Prostate gland (tissue), 2 donors: ENCODE measurements at regions of chr1 and their contacts with region 1.

Region 1: GRCh38 chr1:2270260-2271100 is 42.4 kb downstream of the SKI start:
- DNase-seq: no peak
- H3K4me3 ChIP-seq: no peak overlapping the region
- H3K27ac ChIP-seq: peak overlapping the region in 1 of 2 donors; percentile 18
- H3K4me1 ChIP-seq: peaks cover 24% of the 10 kb centered on the region
- H3K27me3 ChIP-seq: no peaks in the 10 kb centered on the region
- CTCF ChIP-seq: no peak
- POLR2A ChIP-seq: no peak

Region 2: GRCh38 chr1:1752665-1753606 is 517.5 kb before region 1 on chr1:
- intact Hi-C with region 1: no loop called
- DNase-seq: no peak
- H3K4me3 ChIP-seq: no peak overlapping the region
- H3K27ac ChIP-seq: no peak overlapping the region
- H3K4me1 ChIP-seq: peaks cover 3% of the 10 kb centered on the region
- H3K27me3 ChIP-seq: no peaks in the 10 kb centered on the region
- CTCF ChIP-seq: no peak
- POLR2A ChIP-seq: no peak

Region 3: GRCh38 chr1:2233997-2234761 is 36.3 kb before region 1 on chr1:
- intact Hi-C with region 1: loop called (anchors 5 kb)
- DNase-seq: peak; percentile 85
- H3K4me3 ChIP-seq: peak overlapping the region; percentile 11 to 13
- H3K27ac ChIP-seq: peak overlapping the region; percentile 93 to 95
- H3K4me1 ChIP-seq: peaks cover 49% of the 10 kb centered on the region
- H3K27me3 ChIP-seq: no peaks in the 10 kb centered on the region
- CTCF ChIP-seq: no peak
- POLR2A ChIP-seq: no peak

Region 4: GRCh38 chr1:2525920-2526823 is 255.7 kb after region 1 on chr1 and contains the start of gene PANK4:
- intact Hi-C with region 1: no loop called
- DNase-seq: peak; percentile 92
- H3K4me3 ChIP-seq: peak within 1 kb of the TSS; percentile 78 to 83
- H3K27ac ChIP-seq: peak within 1 kb of the TSS; percentile 76 to 84
- H3K4me1 ChIP-seq: peaks cover 18% of the 10 kb centered on the region
- H3K27me3 ChIP-seq: no peaks in the 10 kb centered on the region
- CTCF ChIP-seq: peak in 2 of 4 experiments; percentile 45 to 60
- POLR2A ChIP-seq: peak; percentile 54
- total RNA-seq, gene PANK4: 27.0 to 69.5 TPM